A673 (cell line): ENCODE measurements at regions of chr1 and their contacts with region 1.

Region 1: DNA sequence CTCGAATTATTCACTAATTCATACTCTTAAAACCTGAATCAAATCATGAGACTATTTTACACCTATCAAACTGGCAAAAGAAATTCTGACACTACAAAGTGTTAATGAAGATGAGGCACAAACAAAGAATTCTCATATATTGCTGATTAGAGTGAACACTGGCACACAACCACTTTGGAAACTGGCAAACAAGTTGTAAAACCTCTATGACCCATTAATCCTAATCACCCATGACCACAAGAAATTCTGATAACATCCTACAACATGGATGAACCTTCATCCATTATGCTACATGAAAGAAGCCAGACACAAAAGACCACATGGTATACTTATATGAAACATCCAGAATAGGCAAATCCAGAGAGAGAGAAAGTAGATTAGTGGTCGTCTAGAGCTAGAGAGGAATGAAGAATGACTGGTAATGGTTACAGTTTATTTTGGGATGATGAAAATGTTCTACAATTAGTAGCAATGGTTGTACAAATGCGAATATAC is 8.5 kb downstream of the GPBP1L1 start:
- DNase-seq: no peak
- H3K4me3 ChIP-seq: no peak overlapping the region
- H3K27ac ChIP-seq: no peak overlapping the region
- H3K4me1 ChIP-seq: peaks cover 51% of the 10 kb centered on the region
- H3K27me3 ChIP-seq: no peaks in the 10 kb centered on the region
- CTCF ChIP-seq: no peak

Region 2: DNA sequence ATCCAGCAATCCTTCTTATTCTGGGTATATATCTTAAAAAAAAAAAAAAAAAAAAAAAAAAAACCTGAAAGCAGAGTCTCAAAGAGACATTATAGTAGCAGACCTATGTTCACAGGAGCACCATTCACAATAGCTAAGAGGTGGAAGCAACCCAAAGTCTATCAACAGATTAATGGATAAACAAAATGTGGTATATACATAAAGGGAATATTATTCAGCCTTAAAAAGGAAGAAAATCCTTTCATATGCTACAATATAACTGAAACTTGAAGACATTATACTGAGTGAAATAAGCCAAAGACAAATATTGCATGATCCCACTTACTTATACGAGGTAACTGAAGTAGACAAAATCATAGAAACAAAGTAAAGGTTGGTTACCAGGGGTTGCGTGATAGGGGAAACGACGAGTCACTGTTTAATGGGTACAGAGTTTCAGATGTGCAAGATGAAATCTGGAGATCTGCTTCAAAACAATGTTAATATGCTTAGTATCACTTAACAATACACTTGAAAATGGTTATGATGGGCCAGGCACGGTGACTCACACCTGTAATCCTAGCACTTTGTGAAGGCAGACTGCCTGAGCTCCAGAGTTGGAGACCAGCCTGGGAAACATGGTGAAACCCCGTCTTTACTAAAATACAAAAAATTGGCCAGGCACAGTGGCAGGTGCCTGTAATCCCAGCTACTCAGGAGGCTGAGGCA is 425.1 kb after region 1 on chr1:
- CTCF ChIA-PET with region 1: no interaction called
- POLR2A ChIA-PET with region 1: interaction called, 24 read pairs
- intact Hi-C with region 1: no loop called
- DNase-seq: no peak
- H3K4me3 ChIP-seq: no peak overlapping the region
- H3K27ac ChIP-seq: no peak overlapping the region
- H3K4me1 ChIP-seq: no peaks in the 10 kb centered on the region
- H3K27me3 ChIP-seq: no peaks in the 10 kb centered on the region
- CTCF ChIP-seq: no peak